ENCODE measurements at regions of chr6 and their contacts with region 1.

Region 1: GRCh38 chr6:127266178-127266891 is at the start of gene RNF146:
- DNase-seq: peak; percentile 87 to 93
- ATAC-seq: peak; percentile 92 to 94 (median 93)
- H3K4me3 ChIP-seq: peak within 1 kb of the TSS; percentile 92
- H3K27ac ChIP-seq: peak within 1 kb of the TSS; percentile 100
- H3K4me1 ChIP-seq: peaks cover 30% of the 10 kb centered on the region
- H3K27me3 ChIP-seq: no peaks in the 10 kb centered on the region
- CTCF ChIP-seq: peak; percentile 70
- total RNA-seq, gene RNF146: 64.3 to 80.9 (median 73.7) TPM

Region 2: DNA sequence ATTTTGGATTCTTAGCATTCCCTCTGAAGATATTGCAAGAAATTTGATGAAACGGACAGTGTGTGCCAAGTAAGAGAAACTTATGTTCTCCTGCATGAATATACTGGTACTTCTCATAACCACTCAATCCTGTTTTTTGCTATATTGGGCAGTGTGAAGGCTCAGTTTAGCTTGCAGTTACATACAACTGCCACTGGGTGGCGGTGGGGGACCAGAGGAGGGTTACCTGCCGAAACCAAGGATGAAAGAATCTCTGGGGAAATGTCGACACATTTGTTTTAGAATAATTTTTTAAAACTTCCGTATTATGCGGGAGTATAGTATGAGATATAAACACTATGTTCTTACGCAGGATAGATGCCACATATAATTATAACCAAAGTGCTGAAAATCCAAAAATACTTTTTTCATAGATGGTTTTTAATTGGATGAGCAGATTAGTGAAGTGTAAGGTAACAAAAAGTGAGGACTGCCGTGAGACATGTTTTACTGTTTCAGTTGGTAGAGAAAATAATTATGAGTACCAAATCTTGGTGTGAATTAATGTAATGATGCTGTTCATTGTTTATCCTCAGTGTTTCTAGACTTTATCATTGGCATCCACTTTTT is 1270.3 kb before region 1 on chr6:
- intact Hi-C with region 1: loop called in 1 of 2 experiments (anchors 10 kb)
- DNase-seq: peak; percentile 50 to 73
- ATAC-seq: peak; percentile 66 to 96 (median 84)
- H3K4me3 ChIP-seq: no peak overlapping the region
- H3K27ac ChIP-seq: no peak overlapping the region
- H3K4me1 ChIP-seq: no peaks in the 10 kb centered on the region
- H3K27me3 ChIP-seq: no peaks in the 10 kb centered on the region
- CTCF ChIP-seq: peak; percentile 95

Region 3: DNA sequence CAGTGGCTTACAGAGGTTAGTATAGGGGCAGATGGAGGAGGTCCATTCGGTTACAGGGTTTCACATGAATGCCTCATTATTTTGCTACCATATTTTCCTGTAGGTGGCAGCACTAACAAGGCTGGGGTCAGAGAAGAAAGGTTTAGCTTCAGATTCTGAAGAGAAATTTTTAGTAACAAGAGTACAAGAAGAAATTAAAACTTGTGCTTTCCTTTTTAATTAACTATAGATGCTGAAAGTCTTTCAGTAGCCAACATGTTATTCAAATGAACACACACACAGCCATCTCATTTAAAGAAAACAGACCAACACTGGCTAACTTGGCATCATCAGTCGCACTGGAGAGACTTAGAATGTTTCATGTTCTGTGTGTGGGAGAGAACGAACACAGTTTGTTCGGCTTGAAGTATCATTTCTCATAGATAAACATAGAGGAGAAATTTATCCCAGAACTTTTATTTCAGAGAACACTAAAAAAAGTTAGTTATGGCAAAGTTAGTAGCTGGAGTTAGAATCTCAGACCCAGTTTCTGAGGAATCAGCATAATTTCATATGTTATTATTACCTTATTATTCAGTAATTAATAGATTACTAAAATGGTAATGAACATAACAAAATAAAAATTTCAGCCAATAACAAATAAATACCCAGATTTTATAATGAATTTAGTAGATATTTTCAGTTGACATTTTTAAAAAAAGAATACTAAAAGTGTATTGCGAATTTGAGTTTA is 461.8 kb before region 1 on chr6:
- intact Hi-C with region 1: loop called in 1 of 2 experiments (anchors 10 kb)
- DNase-seq: no peak
- ATAC-seq: peak; percentile 48 to 91 (median 61)
- H3K4me3 ChIP-seq: no peak overlapping the region
- H3K27ac ChIP-seq: no peak overlapping the region
- H3K4me1 ChIP-seq: no peaks in the 10 kb centered on the region
- H3K27me3 ChIP-seq: no peaks in the 10 kb centered on the region
- CTCF ChIP-seq: peak; percentile 68

Region 4: GRCh38 chr6:127146932-127147331 is 119.4 kb before region 1 on chr6:
- intact Hi-C with region 1: loop called in 1 of 2 experiments (anchors 5 kb)
- DNase-seq: no peak
- ATAC-seq: peak in 2 of 4 donors; percentile 30 to 46
- H3K4me3 ChIP-seq: no peak overlapping the region
- H3K27ac ChIP-seq: peak overlapping the region; percentile 64
- H3K4me1 ChIP-seq: peaks cover 31% of the 10 kb centered on the region
- H3K27me3 ChIP-seq: no peaks in the 10 kb centered on the region
- CTCF ChIP-seq: no peak

Region 5: GRCh38 chr6:127190552-127190951 is 75.8 kb before region 1 on chr6:
- intact Hi-C with region 1: loop called (anchors 1 to 5 kb)
- DNase-seq: no peak
- ATAC-seq: peak in 2 of 4 donors; percentile 28 to 50
- H3K4me3 ChIP-seq: no peak overlapping the region
- H3K27ac ChIP-seq: peak overlapping the region; percentile 84
- H3K4me1 ChIP-seq: peaks cover 30% of the 10 kb centered on the region
- H3K27me3 ChIP-seq: no peaks in the 10 kb centered on the region
- CTCF ChIP-seq: peak; percentile 58

Measured in psoas muscle (tissue), 8 donors.